ENCODE measurements at regions of chr6 and their contacts with region 1.

Region 1: DNA sequence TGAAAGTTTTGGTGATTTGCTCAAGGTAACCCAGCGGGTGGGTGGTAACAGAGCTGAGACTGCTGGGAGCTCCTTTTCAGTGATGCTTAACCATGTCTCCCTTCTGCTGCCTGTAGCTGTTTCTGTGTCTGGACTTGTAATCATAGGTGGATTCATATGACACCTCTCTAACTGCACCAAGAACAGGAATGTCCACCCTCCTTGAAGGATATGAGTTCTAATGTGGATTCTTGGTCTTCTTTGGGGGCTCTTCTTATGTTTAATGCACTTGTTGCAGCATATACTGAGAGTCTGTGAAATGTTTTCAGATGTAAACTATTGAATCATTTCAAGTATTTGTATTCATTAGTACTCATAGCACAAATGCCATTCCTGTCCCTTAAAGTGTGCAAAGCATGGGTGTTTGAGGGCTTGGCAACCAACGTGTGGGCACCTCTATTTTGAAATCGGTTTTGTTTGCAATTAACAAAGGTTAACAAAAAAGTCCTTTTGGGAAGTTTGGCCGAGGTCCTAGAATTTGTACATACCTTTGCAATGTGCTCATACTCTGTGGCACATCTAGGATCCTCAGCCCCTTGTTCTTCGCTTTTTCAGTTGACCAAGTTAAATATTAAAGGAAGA is 138.0 kb downstream of the SOX4 start:
- DNase-seq: peak; percentile 74
- H3K4me3 Mint-ChIP-seq: no peak overlapping the region
- H3K27ac Mint-ChIP-seq: peak overlapping the region; percentile 22
- H3K4me1 Mint-ChIP-seq: peaks cover 62% of the 10 kb centered on the region
- H3K27me3 Mint-ChIP-seq: no peaks in the 10 kb centered on the region
- CTCF ChIP-seq: no peak

Region 2: DNA sequence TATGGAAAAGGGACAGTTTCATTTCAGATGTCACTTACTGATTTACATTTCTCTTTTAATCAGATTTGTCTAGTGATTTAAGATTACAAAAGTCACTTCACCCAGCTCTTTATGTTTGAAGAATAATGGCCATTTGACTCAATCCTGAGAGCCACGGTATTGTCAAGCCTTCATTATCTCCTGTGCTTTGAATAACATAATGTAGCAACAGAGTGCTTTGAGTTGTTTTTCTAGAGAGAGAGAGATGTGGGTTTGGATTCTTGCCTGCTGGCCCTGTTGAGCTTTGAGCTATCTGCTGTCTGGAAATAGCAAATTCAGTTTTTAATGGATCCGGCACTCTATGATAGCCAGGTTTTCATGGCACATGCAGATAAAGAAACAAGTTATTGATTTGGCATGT is 616.4 kb before region 1 on chr6:
- CTCF ChIA-PET with region 1: no interaction called
- intact Hi-C with region 1: no loop called
- DNase-seq: no peak
- H3K4me3 Mint-ChIP-seq: no peak overlapping the region
- H3K27ac Mint-ChIP-seq: no peak overlapping the region
- H3K4me1 Mint-ChIP-seq: peaks cover 36% of the 10 kb centered on the region
- H3K27me3 Mint-ChIP-seq: no peaks in the 10 kb centered on the region
- CTCF ChIP-seq: no peak

Region 3: GRCh38 chr6:21679761-21680265 is 51.7 kb before region 1 on chr6:
- CTCF ChIA-PET with region 1: no interaction called
- intact Hi-C with region 1: loop called (anchors 2 kb)
- DNase-seq: no peak
- H3K4me3 Mint-ChIP-seq: no peak overlapping the region
- H3K27ac Mint-ChIP-seq: no peak overlapping the region
- H3K4me1 Mint-ChIP-seq: peaks cover 16% of the 10 kb centered on the region
- H3K27me3 Mint-ChIP-seq: no peaks in the 10 kb centered on the region
- CTCF ChIP-seq: no peak

Region 4: GRCh38 chr6:21715180-21715579 is 16.3 kb before region 1 on chr6:
- CTCF ChIA-PET with region 1: no interaction called
- intact Hi-C with region 1: no loop called
- DNase-seq: no peak
- H3K4me3 Mint-ChIP-seq: no peak overlapping the region
- H3K27ac Mint-ChIP-seq: no peak overlapping the region
- H3K4me1 Mint-ChIP-seq: no peaks in the 10 kb centered on the region
- H3K27me3 Mint-ChIP-seq: no peaks in the 10 kb centered on the region
- CTCF ChIP-seq: no peak

Region 5: GRCh38 chr6:21800948-21801438 is 69.5 kb after region 1 on chr6:
- CTCF ChIA-PET with region 1: no interaction called
- intact Hi-C with region 1: no loop called
- DNase-seq: peak; percentile 56
- H3K4me3 Mint-ChIP-seq: no peak overlapping the region
- H3K27ac Mint-ChIP-seq: peak overlapping the region; percentile 84
- H3K4me1 Mint-ChIP-seq: peaks cover 22% of the 10 kb centered on the region
- H3K27me3 Mint-ChIP-seq: no peaks in the 10 kb centered on the region
- CTCF ChIP-seq: no peak

Region 6: DNA sequence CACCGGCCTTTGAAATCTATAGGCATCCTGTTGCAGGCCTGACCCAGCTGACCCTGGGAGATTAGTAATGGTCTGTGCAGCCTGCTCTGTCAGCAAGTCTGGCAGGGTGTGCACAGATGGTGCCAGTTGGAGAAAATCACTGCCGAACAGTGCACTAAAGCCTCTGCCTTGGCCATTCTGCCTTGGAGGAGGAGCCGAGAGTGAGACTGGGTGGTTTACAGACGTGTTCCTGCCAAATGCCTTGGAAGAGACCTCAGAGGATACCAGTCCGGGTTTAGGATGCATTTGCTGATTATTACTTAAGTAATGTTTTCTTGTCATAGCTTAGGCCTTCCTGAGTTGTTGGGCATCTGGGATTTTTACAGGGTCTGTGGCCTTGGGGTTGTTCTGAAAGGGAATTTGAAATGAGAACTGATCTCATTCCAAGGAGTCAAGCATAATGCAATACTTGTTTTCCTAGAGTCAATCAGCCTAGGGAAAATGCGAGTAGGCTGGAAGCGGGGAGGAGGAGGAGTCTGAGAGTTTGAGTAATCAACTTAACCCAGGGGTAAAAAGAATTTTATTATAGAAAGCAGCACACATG is 154.1 kb after region 1 on chr6:
- CTCF ChIA-PET with region 1: no interaction called
- intact Hi-C with region 1: loop called (anchors 5 kb)
- DNase-seq: peak; percentile 86
- H3K4me3 Mint-ChIP-seq: no peak overlapping the region
- H3K27ac Mint-ChIP-seq: no peak overlapping the region
- H3K4me1 Mint-ChIP-seq: peaks cover 10% of the 10 kb centered on the region
- H3K27me3 Mint-ChIP-seq: no peaks in the 10 kb centered on the region
- CTCF ChIP-seq: no peak

Region 7: DNA sequence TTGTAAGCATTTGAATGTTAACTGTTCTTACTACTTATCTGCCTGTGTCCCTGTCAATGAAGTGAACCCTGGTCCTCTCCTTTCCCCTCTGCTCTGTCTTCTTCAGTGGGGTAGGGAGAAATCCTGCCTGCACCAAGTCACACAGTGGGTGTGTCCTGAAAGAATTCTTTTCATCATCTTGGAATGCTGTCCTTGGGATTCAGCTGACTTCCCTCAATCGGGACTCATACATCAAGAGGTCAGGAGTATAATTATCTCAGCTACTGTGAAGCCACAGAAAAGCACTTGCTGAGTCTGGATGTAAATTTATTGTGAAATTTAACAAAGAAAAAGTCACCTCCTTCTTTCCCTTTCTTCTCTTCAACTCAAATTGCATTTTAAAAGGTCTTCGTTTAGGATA is 190.6 kb after region 1 on chr6:
- CTCF ChIA-PET with region 1: no interaction called
- intact Hi-C with region 1: loop called (anchors 2 kb)
- DNase-seq: no peak
- H3K4me3 Mint-ChIP-seq: no peak overlapping the region
- H3K27ac Mint-ChIP-seq: no peak overlapping the region
- H3K4me1 Mint-ChIP-seq: peaks cover 52% of the 10 kb centered on the region
- H3K27me3 Mint-ChIP-seq: no peaks in the 10 kb centered on the region
- CTCF ChIP-seq: no peak

Region 8: DNA sequence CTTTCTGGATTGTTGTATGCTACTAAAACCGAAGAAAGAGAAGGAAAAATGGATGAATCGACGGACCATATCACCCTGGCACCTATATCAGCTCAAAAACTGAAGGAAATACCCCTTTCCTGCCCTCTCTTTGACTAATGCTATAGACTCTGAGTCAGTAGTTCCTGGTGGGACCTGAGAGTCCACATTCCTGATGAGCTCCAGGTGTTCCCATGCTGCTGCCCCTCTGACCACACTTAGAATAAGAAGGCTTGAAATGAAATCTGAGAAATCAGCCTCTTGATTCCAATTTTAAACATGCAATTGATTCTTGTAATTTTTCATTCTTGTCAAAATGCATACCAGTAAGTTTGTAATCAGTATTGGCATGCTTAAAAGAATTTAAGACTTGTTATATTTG is 490.1 kb after region 1 on chr6:
- CTCF ChIA-PET with region 1: no interaction called
- intact Hi-C with region 1: loop called (anchors 10 kb)
- DNase-seq: peak; percentile 79
- H3K4me3 Mint-ChIP-seq: peak overlapping the region; percentile 34
- H3K27ac Mint-ChIP-seq: peak overlapping the region; percentile 53
- H3K4me1 Mint-ChIP-seq: peaks cover 13% of the 10 kb centered on the region
- H3K27me3 Mint-ChIP-seq: no peaks in the 10 kb centered on the region
- CTCF ChIP-seq: no peak

Region 9: GRCh38 chr6:22880686-22881433 is 1149.3 kb after region 1 on chr6:
- CTCF ChIA-PET with region 1: no interaction called
- intact Hi-C with region 1: loop called (anchors 10 kb)
- DNase-seq: peak; percentile 51
- H3K4me3 Mint-ChIP-seq: peak overlapping the region; percentile 24
- H3K27ac Mint-ChIP-seq: peak overlapping the region; percentile 95
- H3K4me1 Mint-ChIP-seq: peaks cover 61% of the 10 kb centered on the region
- H3K27me3 Mint-ChIP-seq: no peaks in the 10 kb centered on the region
- CTCF ChIP-seq: no peak